ENCODE measurements at regions of chr3 and their contacts with region 1.

Region 1: DNA sequence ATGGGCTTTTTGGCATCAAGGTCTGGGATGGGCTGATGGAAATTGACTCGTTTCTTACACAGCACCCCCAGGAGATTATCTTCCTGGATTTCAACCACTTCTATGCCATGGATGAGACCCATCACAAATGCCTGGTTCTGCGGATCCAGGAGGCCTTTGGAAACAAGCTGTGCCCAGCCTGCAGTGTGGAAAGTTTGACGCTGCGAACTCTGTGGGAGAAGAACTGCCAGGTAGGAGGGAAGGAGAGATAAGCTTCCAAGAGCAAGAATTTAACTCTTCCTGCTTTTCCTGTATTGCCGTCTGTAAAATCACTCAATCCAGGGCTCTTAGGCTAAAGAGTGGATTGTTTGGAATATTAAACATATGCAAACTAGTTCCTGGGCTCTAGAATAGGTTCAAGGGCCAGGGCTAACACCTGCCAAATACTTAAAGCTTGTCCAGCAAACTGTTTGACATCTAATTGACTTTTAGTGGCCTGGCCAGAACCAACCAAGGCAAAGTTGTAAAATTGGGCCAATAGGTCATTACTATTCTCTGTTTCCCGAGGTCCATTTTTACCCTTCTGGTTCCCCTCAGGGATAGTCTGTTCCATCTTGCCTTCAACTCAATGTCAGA is 113.1 kb upstream of the ZBED2 start:
- DNase-seq: no peak
- H3K4me3 ChIP-seq: no peak overlapping the region
- H3K27ac ChIP-seq: no peak overlapping the region
- H3K4me1 ChIP-seq: no peaks in the 10 kb centered on the region
- H3K27me3 ChIP-seq: no peaks in the 10 kb centered on the region
- CTCF ChIP-seq: no peak

Region 2: GRCh38 chr3:111650378-111651275 is 57.6 kb before region 1 on chr3:
- CTCF ChIA-PET with region 1: no interaction called
- POLR2A ChIA-PET with region 1: no interaction called
- intact Hi-C with region 1: no loop called
- DNase-seq: no peak
- H3K4me3 ChIP-seq: no peak overlapping the region
- H3K27ac ChIP-seq: no peak overlapping the region
- H3K4me1 ChIP-seq: no peaks in the 10 kb centered on the region
- H3K27me3 ChIP-seq: no peaks in the 10 kb centered on the region
- CTCF ChIP-seq: no peak

Region 3: DNA sequence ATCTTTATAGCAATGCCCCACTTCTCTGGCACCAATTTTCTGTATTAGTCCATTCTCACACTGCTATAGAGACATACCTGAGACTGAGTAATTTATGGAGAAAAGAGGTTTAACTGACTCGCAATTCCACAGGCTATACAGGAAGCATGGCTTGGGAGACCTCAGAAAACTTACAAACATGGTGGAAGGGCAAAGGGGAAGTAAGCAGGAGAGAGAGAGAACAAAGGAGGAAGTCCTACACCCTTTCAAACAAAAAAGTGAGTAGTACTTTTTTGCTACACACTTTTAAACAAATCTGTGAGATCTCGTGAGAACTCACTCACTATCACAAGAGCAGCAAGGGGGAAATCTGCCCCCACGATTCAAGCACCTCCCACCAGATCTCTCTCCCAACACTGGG is 45.4 kb before region 1 on chr3:
- CTCF ChIA-PET with region 1: no interaction called
- POLR2A ChIA-PET with region 1: no interaction called
- intact Hi-C with region 1: no loop called
- DNase-seq: no peak
- H3K4me3 ChIP-seq: no peak overlapping the region
- H3K27ac ChIP-seq: no peak overlapping the region
- H3K4me1 ChIP-seq: peaks cover 1% of the 10 kb centered on the region; the same call in 1 of the 2 replicates
- H3K27me3 ChIP-seq: no peaks in the 10 kb centered on the region
- CTCF ChIP-seq: no peak

Region 4: GRCh38 chr3:111794711-111795110 is 86.4 kb after region 1 on chr3:
- CTCF ChIA-PET with region 1: interaction called, 11 read pairs
- POLR2A ChIA-PET with region 1: no interaction called
- intact Hi-C with region 1: no loop called
- DNase-seq: no peak
- H3K4me3 ChIP-seq: no peak overlapping the region
- H3K27ac ChIP-seq: no peak overlapping the region
- H3K4me1 ChIP-seq: no peaks in the 10 kb centered on the region
- H3K27me3 ChIP-seq: no peaks in the 10 kb centered on the region
- CTCF ChIP-seq: no peak